ENCODE measurements at regions of chr11 and their contacts with region 1.

Region 1: DNA sequence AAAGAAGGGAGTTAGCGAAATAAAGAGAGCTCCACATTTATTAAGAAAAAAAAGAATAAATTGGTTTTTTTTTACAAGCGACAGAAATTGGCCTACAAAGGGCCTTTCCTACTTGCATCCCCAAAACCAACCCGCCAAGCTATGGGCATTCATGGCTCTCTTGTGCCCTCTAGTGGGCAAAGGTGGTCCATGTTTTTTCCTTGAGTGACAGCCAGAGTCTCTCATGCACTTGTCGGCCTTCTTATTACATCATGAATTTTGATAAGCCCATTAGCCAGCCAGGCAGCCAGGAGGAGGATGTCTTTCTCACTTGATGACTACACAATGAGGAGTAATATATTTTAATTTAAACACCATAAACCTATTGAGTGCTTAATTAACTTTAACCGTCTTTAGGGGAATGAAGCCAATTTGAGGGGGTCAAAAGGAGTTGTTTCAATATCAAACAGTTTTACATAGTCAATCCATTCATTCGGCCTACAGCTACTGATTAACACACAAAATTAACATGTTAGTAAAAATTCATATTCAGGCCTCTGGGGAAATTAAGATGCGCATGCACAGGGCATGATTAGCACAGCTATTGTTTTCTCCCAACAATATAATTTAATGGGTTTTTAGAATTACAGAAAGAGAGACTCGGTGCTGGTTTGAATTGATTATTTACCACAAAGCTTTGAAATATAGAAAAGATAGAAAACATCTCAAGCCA is 85.5 kb downstream of the RCN1 start:
- DNase-seq: peak; percentile 65 to 83
- ATAC-seq: peak; percentile 83 to 87
- H3K4me3 ChIP-seq: no peak overlapping the region
- H3K27ac ChIP-seq: no peak overlapping the region
- H3K4me1 ChIP-seq: no peaks in the 10 kb centered on the region
- CTCF ChIP-seq: peak; percentile 94
- EP300 ChIP-seq: no peak
- POLR2A ChIP-seq: no peak
- RAD21 ChIP-seq: peak; percentile 93 to 94

Region 2: DNA sequence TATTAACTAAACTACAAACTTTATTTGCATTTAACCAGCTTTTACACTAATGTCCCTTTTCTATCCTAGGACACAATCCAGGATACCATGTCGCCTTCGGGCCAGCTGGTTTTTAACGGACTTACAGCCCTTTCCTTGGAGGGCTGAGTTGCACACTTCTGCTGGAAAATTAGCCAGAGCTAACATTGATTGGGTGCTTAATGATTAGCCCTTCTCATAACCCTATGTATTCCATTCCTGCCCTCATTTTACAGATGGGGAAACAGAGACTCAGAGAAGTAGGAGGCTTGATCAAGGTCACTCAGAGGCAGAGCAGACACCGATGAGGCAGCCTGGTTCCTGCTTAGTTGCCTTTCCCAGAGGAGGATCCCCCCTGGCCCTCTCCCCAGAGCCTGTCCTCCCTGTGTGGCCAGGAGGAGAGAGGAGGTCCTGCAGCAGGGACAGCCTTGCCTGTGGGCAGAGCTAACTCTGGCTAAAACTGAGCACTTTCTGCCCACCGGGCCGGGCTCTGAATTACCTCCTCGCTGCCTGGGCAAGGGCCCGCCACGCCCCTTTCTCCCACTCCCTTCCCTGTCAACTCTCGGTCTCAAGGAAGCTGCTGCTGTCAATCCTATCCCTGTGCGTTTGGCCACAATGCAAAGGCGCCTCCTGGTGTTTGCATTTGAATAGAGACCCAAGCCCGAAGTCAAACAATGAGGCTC is 305.6 kb before region 1 on chr11:
- CTCF ChIA-PET with region 1: interaction called, 10 read pairs
- POLR2A ChIA-PET with region 1: no interaction called
- DNase-seq: peak; percentile 47 to 48
- ATAC-seq: peak; percentile 83 to 94
- H3K4me3 ChIP-seq: no peak overlapping the region
- H3K27ac ChIP-seq: no peak overlapping the region
- H3K4me1 ChIP-seq: no peaks in the 10 kb centered on the region; the same call in 2 of the 3 replicates
- CTCF ChIP-seq: peak; percentile 82
- EP300 ChIP-seq: no peak
- POLR2A ChIP-seq: no peak
- RAD21 ChIP-seq: peak; percentile 91 to 92

Region 3: GRCh38 chr11:32065865-32066264 is 110.5 kb before region 1 on chr11:
- CTCF ChIA-PET with region 1: interaction called, 11 read pairs
- POLR2A ChIA-PET with region 1: no interaction called
- DNase-seq: no peak
- ATAC-seq: no peak
- H3K4me3 ChIP-seq: no peak overlapping the region
- H3K27ac ChIP-seq: no peak overlapping the region
- H3K4me1 ChIP-seq: no peaks in the 10 kb centered on the region
- CTCF ChIP-seq: no peak
- EP300 ChIP-seq: no peak
- POLR2A ChIP-seq: no peak
- RAD21 ChIP-seq: no peak

Region 4: DNA sequence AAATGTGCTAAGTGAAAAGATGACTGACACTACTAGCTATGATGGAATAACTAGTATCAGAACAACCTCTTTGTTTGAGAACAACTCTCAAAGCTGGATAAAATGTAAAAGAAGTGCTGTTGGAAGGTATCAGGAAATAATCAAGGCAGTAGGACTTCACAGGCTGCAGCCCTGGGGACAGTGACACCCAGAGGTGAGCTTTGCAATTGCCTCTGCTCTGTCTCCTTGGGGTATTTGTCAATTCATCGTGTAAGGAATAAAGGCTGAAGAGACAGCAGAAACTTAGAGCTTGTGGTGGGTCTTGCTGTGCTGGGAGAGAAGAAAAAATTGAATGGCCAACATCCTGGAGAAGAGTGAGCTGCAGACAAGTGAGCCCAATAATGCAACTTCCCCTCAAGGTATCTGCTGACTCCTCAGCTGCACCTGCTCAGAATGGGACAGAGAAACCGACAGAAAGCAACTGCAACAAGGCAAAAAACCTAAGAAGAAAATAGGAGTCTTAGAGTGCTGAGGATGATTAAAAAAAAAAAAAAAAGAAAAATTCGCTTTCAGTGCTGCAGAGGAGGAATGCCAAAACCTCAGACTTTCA is 55.6 kb after region 1 on chr11:
- CTCF ChIA-PET with region 1: interaction called, 13 read pairs
- POLR2A ChIA-PET with region 1: no interaction called
- DNase-seq: peak; percentile 35 to 53
- ATAC-seq: peak; percentile 89 to 95; a peak in 5 of 6 replicates
- H3K4me3 ChIP-seq: no peak overlapping the region
- H3K27ac ChIP-seq: no peak overlapping the region
- H3K4me1 ChIP-seq: no peaks in the 10 kb centered on the region
- CTCF ChIP-seq: peak; percentile 54
- EP300 ChIP-seq: no peak
- POLR2A ChIP-seq: no peak
- RAD21 ChIP-seq: peak; percentile 43 to 48; a peak in 4 of 5 replicates